ENCODE measurements at regions of chr10 and their contacts with region 1.

Region 1: GRCh38 chr10:117461766-117462423 is 80.7 kb upstream of the EMX2 start:
- DNase-seq: peak; percentile 81
- H3K4me3 ChIP-seq: no peak overlapping the region
- H3K27ac ChIP-seq: peak overlapping the region; percentile 2 to 50
- H3K4me1 ChIP-seq: no peaks in the 10 kb centered on the region
- H3K27me3 ChIP-seq: no peaks in the 10 kb centered on the region
- CTCF ChIP-seq: no peak
- POLR2A ChIP-seq: peak; percentile 11

Region 2: GRCh38 chr10:117804470-117805011 is 342.6 kb after region 1 on chr10:
- intact Hi-C with region 1: loop called (anchors 10 kb)
- DNase-seq: peak; percentile 12
- H3K4me3 ChIP-seq: no peak overlapping the region
- H3K27ac ChIP-seq: peak overlapping the region; percentile 1 to 69
- H3K4me1 ChIP-seq: no peaks in the 10 kb centered on the region
- H3K27me3 ChIP-seq: no peaks in the 10 kb centered on the region
- CTCF ChIP-seq: no peak
- POLR2A ChIP-seq: no peak

Region 3: DNA sequence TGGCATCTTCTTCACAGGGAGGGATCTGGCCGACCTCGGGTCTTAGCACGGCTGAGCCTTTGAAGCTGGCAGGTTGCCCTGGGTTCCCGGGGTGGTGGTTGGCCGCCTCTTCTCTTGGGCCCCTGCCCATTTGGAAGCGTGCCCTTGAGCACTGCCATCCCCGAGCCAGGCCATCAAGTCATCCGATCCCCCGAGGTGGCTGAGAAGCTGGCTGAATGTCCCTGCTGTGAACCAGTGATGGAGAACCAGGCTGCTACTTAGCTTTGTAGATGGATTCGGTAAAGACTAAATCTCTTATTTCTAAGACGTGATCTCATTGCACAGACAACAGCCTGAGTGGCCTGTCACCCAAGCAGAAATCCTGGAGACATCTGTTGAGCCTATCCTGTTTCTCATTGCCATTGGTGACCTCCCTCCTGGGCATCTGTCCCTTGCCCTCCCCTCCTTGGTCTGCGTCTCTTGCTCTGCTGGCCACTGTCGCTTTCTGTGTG is 1819.7 kb after region 1 on chr10:
- intact Hi-C with region 1: loop called (anchors 10 kb)
- DNase-seq: peak; percentile 48
- H3K4me3 ChIP-seq: no peak overlapping the region
- H3K27ac ChIP-seq: peak overlapping the region in 1 of 2 donors; percentile 22
- H3K4me1 ChIP-seq: peaks cover 6% of the 10 kb centered on the region
- H3K27me3 ChIP-seq: no peaks in the 10 kb centered on the region
- CTCF ChIP-seq: no peak
- POLR2A ChIP-seq: no peak